ENCODE measurements at regions of chr16 and their contacts with region 1.

Region 1: GRCh38 chr16:71537643-71538042 is 11.4 kb downstream of the CHST4 start:
- DNase-seq: peak; percentile 63 to 64
- ATAC-seq: peak; percentile 92 to 93
- H3K4me3 ChIP-seq: no peak overlapping the region
- H3K27ac ChIP-seq: no peak overlapping the region
- H3K4me1 ChIP-seq: no peaks in the 10 kb centered on the region
- CTCF ChIP-seq: peak; percentile 63
- EP300 ChIP-seq: no peak
- POLR2A ChIP-seq: no peak
- RAD21 ChIP-seq: peak; percentile 61 to 71

Region 2: GRCh38 chr16:71428888-71429287 is 108.8 kb before region 1 on chr16:
- CTCF ChIA-PET with region 1: no interaction called
- POLR2A ChIA-PET with region 1: no interaction called
- DNase-seq: no peak
- ATAC-seq: no peak
- H3K4me3 ChIP-seq: no peak overlapping the region
- H3K27ac ChIP-seq: no peak overlapping the region
- H3K4me1 ChIP-seq: peaks cover 5% of the 10 kb centered on the region; the same call in 1 of the 3 replicates
- CTCF ChIP-seq: no peak
- EP300 ChIP-seq: no peak
- POLR2A ChIP-seq: no peak
- RAD21 ChIP-seq: no peak

Region 3: DNA sequence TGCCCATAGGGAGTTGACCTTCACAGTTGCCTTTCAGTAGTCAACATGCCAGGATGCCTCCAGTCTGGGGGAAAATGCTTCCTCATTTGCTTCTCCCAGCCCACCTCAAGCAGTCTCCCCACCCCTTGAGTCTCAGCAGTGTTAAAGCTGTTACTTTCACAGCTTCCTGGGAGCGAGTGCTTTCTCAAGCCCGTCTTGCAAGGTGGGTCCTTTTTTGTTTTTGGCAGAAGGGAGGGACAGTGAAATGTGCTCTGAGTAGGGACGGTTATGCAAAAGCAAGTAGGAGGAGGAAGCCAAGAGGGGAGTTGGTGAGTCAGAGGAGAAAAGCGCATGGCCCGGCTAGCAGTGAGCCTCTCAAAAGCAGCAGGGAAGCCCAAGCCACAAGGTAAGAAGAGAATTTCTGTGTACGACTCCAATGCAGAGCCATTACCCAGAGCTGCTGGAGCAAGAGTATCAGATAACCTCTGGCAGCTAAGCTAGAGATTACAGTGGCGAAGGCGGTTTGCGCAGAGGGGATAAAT is 11.5 kb before region 1 on chr16 and contains the start of gene CHST4:
- CTCF ChIA-PET with region 1: interaction called, 12 read pairs
- POLR2A ChIA-PET with region 1: no interaction called
- DNase-seq: peak; percentile 16 to 24
- ATAC-seq: peak; percentile 57 to 72; a peak in 4 of 6 replicates
- H3K4me3 ChIP-seq: no peak within 1 kb of the TSS
- H3K27ac ChIP-seq: peak within 1 kb of the TSS in 1 of 2 experiments; percentile 34; a peak in 1 of 6 replicates
- H3K4me1 ChIP-seq: peaks cover 4% of the 10 kb centered on the region; the same call in 1 of the 3 replicates
- CTCF ChIP-seq: no peak
- EP300 ChIP-seq: no peak
- POLR2A ChIP-seq: no peak
- RAD21 ChIP-seq: no peak
- polyA plus RNA-seq, gene CHST4: 0.08 and 0.12 TPM in 2 replicates

Region 4: DNA sequence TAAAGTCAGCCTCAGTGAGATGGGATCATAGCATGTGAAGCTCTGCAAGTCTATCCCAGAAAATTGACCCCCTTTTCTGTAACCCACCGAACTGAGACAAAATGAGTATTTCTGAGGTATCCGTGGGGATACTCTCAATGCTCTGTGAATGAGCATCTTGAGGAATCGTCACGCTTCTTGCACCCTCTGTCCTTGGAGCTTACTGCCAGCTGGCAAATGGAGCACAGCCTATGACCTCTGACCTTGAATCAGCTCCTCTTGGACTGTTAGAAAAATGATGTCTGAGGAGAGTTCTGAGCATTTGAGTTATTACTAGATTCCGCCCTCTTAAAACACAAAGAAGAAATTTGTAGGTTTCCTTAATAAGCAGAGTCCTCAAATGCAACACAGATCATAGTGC is 1168.2 kb after region 1 on chr16:
- CTCF ChIA-PET with region 1: no interaction called
- POLR2A ChIA-PET with region 1: no interaction called
- DNase-seq: no peak
- ATAC-seq: no peak
- H3K4me3 ChIP-seq: no peak overlapping the region
- H3K27ac ChIP-seq: no peak overlapping the region
- H3K4me1 ChIP-seq: no peaks in the 10 kb centered on the region
- CTCF ChIP-seq: no peak
- EP300 ChIP-seq: no peak
- POLR2A ChIP-seq: no peak
- RAD21 ChIP-seq: no peak

Measured in A549 (cell line).